ENCODE measurements at regions of chr3 and their contacts with region 1.

Region 1: GRCh38 chr3:111850461-111850860 is 8.6 kb upstream of the PHLDB2 start:
- DNase-seq: no peak
- ATAC-seq: no peak
- H3K4me3 ChIP-seq: no peak overlapping the region
- H3K27ac ChIP-seq: no peak overlapping the region
- H3K4me1 ChIP-seq: no peaks in the 10 kb centered on the region
- H3K27me3 ChIP-seq: no peaks in the 10 kb centered on the region
- CTCF ChIP-seq: no peak

Region 2: DNA sequence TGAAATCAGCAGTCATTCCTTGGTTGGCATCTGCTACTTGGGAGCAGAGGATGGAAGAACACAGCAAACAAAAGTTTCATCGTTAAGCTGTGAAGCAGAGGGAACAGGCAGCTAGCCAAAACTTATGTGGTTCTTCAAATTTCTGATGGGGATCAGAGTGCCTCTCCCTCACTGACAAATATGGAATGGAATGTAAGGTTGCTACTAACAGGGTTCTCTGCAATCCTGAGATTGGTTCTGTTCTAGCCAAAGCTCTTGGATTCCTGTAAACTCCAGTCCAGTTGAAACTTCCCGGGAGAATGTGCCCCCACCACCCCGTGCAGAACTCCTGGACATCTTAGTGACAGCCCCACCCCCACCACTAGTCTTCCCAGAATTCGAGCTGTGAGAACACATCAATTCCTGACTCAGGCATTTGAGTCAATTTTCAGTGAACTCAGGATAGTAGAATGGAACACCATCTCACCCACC is 47.3 kb before region 1 on chr3:
- intact Hi-C with region 1: no loop called
- DNase-seq: peak; percentile 85
- ATAC-seq: peak; percentile 55 to 88 (median 82)
- H3K4me3 ChIP-seq: no peak overlapping the region
- H3K27ac ChIP-seq: peak overlapping the region; percentile 59
- H3K4me1 ChIP-seq: no peaks in the 10 kb centered on the region
- H3K27me3 ChIP-seq: no peaks in the 10 kb centered on the region
- CTCF ChIP-seq: no peak

Region 3: DNA sequence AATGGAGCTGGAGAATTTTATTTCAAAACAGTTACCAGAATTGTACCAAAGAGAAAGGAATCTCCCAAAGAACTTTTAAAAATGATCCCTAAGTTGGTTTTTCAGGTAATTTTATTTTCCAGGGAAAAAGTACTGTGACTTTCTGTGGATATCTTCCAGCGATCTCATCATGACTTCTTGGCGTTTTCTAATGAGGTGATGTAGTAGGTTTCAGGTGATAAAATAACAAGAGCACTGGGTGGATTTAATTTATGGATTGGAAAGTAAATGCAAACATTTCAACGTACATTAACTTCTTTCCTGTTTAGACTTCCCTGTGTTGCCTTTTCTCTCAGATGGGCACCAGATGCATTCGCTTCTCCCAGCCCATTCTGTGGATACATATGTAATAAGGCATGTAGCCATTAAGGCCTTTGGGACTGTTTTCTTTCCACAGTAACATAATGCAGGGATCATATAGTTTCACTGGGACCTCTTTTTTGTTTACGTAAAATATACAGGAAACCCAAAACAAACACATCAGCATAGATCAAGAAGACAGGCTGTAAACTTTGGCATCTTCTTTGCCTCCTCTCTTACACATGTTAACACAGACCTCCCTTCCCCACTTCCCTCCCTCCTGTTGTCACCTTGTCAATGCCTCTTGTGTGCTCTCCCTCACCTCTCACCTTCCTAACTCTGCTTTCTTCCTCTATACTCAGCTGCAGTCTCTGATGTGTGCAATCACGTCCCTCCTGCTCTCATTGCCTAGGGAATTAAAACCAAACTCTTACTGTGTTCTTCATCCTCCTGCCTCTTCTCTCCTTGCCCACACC is 21.6 kb after region 1 on chr3:
- intact Hi-C with region 1: loop called in 1 of 2 experiments (anchors 1 kb)
- DNase-seq: no peak
- ATAC-seq: no peak
- H3K4me3 ChIP-seq: no peak overlapping the region
- H3K27ac ChIP-seq: no peak overlapping the region
- H3K4me1 ChIP-seq: no peaks in the 10 kb centered on the region
- H3K27me3 ChIP-seq: no peaks in the 10 kb centered on the region
- CTCF ChIP-seq: no peak